Posterior cingulate gyrus (tissue), 11 donors: ENCODE measurements at regions of chr17 and their contacts with region 1.

Region 1: GRCh38 chr17:7989781-7990655 is 12.4 kb upstream of the GUCY2D start:
- DNase-seq: peak; percentile 79 to 98 (median 88)

Region 2: GRCh38 chr17:7823581-7824397 is 166.2 kb before region 1 on chr17:
- intact Hi-C with region 1: loop called (anchors 2 kb)
- DNase-seq: peak in 3 of 10 donors; percentile 30 to 71 (median 50)

Region 3: GRCh38 chr17:7862692-7863437 is 127.2 kb before region 1 on chr17:
- intact Hi-C with region 1: loop called (anchors 2 kb)
- DNase-seq: peak in 4 of 10 donors; percentile 50 to 65 (median 60)

Region 4: DNA sequence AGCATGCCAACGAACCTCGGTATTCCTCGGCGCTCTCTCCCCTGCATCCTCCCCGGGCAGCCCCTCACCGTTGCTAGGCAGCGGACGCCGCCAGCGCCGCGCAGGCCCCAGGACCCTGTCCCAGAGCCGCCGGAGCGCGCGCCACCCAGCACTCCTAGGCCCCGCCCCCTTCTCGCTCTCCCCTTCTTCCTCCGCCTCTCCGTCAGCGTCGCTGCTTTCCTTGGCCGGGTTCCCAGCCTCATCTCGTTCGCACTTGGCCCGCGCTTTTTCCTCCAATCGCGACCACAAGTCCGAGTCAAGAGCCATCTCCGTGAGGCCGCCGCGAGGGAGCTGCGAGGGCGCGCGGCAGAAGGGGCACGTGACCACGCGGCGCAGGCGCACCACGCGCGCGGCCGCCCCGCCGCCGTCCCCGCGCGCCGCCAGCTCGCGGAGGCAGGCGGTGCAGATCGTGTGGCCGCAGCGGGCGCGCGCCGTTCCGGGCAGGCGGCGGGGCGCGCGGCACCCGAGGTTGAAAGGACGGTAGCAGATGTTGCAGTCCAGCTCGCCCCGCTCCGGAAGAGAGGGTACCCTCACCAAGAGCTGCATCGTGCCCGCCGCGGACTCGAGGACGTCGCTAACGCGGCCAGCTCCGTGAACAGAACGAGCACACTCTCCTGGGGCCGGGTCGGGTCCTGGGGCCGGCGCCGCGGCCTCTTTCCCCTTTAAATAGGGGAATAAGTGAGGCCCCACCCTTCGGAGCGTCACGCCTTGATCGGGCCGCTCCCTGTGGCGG is 74.2 kb before region 1 on chr17 and contains the start of gene RNF227:
- intact Hi-C with region 1: loop called (anchors 1 kb)
- DNase-seq: peak; percentile 77 to 97 (median 83)

Region 5: GRCh38 chr17:8057691-8058114 is 67.7 kb after region 1 on chr17:
- intact Hi-C with region 1: loop called (anchors 5 kb)
- DNase-seq: peak in 4 of 10 donors; percentile 15 to 31 (median 24)